ENCODE measurements at regions of chr7 and their contacts with region 1.

Region 1: GRCh38 chr7:1461646-1462375 is 2.5 kb upstream of the MICALL2 start:
- H3K4me3 ChIP-seq: no peak overlapping the region
- H3K27ac ChIP-seq: no peak overlapping the region
- H3K4me1 ChIP-seq: peaks cover 3% of the 10 kb centered on the region; the same call in 1 of the 2 replicates
- CTCF ChIP-seq: no peak

Region 2: DNA sequence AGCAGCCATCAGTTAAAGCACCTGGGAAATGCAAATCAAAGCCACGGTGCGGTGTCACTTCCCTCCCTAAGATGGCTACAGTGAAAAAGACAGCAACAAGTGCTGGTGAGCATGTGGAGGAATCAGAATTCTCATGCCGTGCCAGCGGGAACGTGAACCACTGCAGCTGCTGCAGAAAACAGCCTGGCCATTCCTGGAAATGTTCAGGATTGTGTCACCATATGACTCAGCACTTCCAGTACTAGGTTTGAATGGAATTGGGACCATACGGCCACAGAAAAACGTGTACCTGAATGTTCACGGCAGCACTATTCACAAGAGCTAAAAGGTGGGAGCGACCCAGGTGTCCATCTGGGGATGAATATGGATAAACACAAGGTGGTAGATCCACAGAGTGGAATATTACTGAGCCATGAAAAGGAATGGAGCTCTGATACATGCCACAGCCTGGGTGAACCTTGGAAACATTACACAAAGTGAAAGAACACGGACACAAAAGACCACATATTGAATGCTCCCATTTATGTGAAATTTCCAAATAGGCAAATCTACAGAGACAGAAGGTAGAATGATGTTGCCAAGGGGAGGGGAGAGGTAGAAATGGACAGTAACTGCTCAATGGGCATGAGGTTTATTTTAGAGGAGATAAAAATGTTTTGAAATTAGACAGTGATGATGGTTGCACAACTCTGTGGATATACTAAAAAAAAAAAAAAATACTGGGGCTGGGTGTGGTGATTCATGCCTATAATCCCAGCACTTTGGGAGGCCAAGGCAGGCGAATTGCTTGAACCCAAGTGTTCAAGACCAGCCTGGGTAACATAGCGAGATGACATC is 64.1 kb before region 1 on chr7:
- CTCF ChIA-PET with region 1: no interaction called
- POLR2A ChIA-PET with region 1: no interaction called
- H3K4me3 ChIP-seq: no peak overlapping the region
- H3K27ac ChIP-seq: no peak overlapping the region
- H3K4me1 ChIP-seq: no peaks in the 10 kb centered on the region
- CTCF ChIP-seq: no peak

Region 3: GRCh38 chr7:1473864-1474512 is 12.2 kb after region 1 on chr7:
- CTCF ChIA-PET with region 1: interaction called, 13 read pairs
- POLR2A ChIA-PET with region 1: interaction called, 3 read pairs
- H3K4me3 ChIP-seq: no peak overlapping the region
- H3K27ac ChIP-seq: no peak overlapping the region; the same call in 1 of the 2 replicates
- H3K4me1 ChIP-seq: no peaks in the 10 kb centered on the region
- CTCF ChIP-seq: peak; percentile 94